K562 (cell line): ENCODE measurements at regions of chr18 and their contacts with region 1.

Region 1: DNA sequence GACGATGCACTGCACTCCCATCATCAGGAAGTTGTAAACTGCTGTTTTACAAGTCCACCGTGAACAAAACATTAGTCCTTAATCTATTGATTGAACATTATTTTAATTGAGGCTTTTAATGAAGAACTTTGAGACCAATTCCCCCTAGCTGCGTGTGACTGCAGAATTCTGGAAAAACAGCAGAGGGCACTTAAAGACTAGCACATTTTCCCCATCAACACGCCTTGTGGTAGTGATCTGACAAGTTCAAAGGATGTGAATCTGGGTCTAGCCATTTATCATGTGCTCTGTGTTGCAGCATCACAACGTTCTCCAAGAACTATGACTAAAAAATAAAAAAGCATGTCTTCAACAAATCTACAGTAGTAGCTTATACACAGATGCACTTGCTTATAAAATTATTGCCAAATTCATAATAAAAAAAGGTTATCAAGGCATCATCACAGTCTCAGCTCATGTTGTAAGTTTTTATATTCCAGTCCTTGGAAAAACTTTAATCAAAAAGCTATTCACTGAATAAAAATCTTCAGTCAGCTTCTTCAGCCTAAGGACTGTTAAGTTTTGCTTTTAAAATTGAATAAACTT is 35.8 kb downstream of the SKOR2 start:
- DNase-seq: peak; percentile 11 to 37 (median 14)
- ATAC-seq: peak; percentile 58; the same call in 1 of the 3 replicates
- H3K4me3 ChIP-seq: no peak overlapping the region
- H3K27ac ChIP-seq: no peak overlapping the region
- H3K4me1 ChIP-seq: no peaks in the 10 kb centered on the region
- H3K27me3 ChIP-seq: no peaks in the 10 kb centered on the region
- CTCF ChIP-seq: peak; percentile 58 to 72 (median 71)
- EP300 ChIP-seq: no peak
- POLR2A ChIP-seq: no peak
- RAD21 ChIP-seq: peak; percentile 68 to 80

Region 2: GRCh38 chr18:47283476-47283875 is 67.8 kb after region 1 on chr18:
- CTCF ChIA-PET with region 1: no interaction called
- POLR2A ChIA-PET with region 1: no interaction called
- in situ Hi-C with region 1: no loop called
- intact Hi-C with region 1: loop called (anchors 5 kb)
- DNase-seq: peak; percentile 22 to 43 (median 24)
- ATAC-seq: peak; percentile 81
- H3K4me3 ChIP-seq: no peak overlapping the region
- H3K27ac ChIP-seq: no peak overlapping the region
- H3K4me1 ChIP-seq: no peaks in the 10 kb centered on the region
- H3K27me3 ChIP-seq: no peaks in the 10 kb centered on the region
- CTCF ChIP-seq: peak; percentile 50 to 59 (median 53)
- EP300 ChIP-seq: no peak
- POLR2A ChIP-seq: no peak
- RAD21 ChIP-seq: peak in 1 of 2 experiments; percentile 43; a peak in 2 of 4 replicates

Region 3: DNA sequence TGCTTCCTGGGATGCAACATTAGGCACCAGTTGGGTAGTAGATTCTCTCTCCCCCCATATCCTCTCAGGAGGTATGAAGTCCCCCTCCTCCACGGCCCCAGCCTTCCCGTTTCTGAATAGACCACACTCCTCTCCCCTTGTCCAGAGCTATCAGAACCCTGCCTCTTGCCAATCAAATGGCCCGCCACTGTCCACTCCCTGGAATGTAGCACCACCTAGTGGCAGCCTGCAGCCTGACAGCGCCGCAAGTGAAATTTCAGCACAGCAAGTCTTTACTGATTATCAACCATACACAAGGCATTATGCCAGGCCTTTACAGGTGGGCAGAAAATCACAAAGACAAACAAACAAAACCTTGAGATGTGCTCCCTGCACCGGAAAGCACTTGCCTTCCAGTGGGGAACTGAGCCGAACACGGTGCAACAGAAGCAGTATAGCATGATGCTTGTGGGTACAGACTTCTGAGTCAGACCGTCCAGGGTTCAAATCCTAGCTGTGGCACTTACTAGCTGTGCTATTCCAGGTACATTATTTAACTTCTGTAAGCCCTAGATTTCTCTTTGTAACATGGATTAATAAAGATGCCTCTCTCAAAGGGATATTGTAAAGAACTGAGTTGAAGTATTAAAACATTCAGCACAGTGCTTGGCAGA is 540.8 kb after region 1 on chr18:
- CTCF ChIA-PET with region 1: interaction called, 3 read pairs
- POLR2A ChIA-PET with region 1: no interaction called
- in situ Hi-C with region 1: no loop called
- intact Hi-C with region 1: loop called (anchors 2 kb)
- DNase-seq: peak; percentile 44 to 56 (median 50)
- ATAC-seq: peak; percentile 79
- H3K4me3 ChIP-seq: no peak overlapping the region
- H3K27ac ChIP-seq: no peak overlapping the region
- H3K4me1 ChIP-seq: peaks cover 0 to 6% of the 10 kb centered on the region in 2 experiments; a peak in 2 of 5 replicates
- H3K27me3 ChIP-seq: no peaks in the 10 kb centered on the region
- CTCF ChIP-seq: peak; percentile 78 to 85 (median 82)
- EP300 ChIP-seq: no peak
- POLR2A ChIP-seq: no peak
- RAD21 ChIP-seq: peak in 1 of 2 experiments; percentile 61; a peak in 2 of 4 replicates